ENCODE measurements at regions of chr1 and their contacts with region 1.

Region 1: DNA sequence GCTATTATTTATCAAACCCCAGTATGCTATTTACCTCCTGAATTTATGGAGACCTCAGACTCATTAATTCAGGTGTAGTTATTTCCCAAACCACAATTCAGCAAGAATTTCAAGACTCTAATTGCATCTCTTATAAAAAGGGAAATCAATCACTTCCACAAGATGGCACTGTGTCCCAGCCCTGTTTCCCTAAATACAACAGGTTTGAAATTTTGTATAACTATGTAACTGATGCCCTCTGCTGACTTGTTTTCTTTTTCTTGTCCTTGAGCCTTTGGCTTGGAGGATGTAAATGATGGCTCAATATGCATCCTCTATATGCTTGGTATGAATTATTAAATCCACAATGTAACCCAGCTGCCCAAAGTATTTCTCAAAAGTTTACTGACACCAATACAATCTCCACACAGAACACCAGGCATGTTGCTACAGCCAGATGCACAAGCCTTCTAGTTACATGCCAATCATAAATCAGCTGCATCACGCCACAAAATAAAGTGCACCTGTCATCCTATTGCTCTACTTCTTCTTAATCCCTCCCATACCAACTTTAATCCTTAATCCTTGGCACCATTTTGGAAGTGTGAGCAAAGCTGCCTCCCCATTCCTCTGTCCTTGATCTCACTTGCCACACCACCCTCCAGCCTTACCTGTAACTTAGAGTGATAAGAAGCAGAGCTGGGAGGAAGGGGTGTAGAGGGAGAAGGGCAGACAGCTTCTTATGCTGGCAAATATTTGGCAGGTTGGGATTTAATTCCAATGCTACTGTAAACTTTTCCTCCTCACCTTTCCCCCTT is 9.0 kb downstream of the C1orf105 start:
- DNase-seq: peak; percentile 55
- H3K4me3 ChIP-seq: no peak overlapping the region
- H3K27ac ChIP-seq: no peak overlapping the region
- H3K4me1 ChIP-seq: no peaks in the 10 kb centered on the region
- H3K27me3 ChIP-seq: no peaks in the 10 kb centered on the region
- CTCF ChIP-seq: peak; percentile 29 to 85 (median 82)
- POLR2A ChIP-seq: no peak

Region 2: DNA sequence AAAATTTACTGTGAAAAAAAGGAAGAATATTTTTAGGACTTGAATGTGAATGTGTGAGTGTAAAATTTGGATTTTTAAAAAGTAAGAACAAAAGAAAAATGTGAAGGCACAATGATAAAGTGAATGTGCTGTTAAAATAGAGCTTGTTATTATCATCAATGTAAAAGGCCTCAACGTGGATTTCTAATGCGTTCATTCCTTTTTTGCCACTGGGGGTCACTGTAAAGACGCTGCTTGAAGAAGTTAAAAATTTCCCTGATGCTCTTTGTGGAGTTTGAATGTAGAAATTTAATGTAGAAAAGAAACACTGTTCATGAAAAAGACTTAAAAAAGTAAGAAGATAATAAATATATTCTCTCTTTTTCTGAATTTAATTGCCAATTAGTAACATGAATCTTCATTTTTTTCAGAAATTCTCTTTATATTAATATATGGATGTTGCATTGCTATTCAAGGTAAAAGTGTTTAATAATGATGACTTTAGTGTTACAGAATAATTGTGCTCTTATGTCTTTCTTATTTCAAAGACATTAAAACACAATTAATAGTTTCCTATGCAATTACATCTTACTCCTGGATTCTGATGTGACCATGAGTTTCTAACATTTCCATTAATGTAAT is 426.7 kb before region 1 on chr1:
- intact Hi-C with region 1: loop called (anchors 10 kb)
- DNase-seq: no peak
- H3K4me3 ChIP-seq: no peak overlapping the region
- H3K27ac ChIP-seq: no peak overlapping the region
- H3K4me1 ChIP-seq: peaks cover 6% of the 10 kb centered on the region
- H3K27me3 ChIP-seq: no peaks in the 10 kb centered on the region
- CTCF ChIP-seq: peak in 3 of 4 experiments; percentile 33 to 59 (median 54)
- POLR2A ChIP-seq: no peak

Region 3: GRCh38 chr1:172154551-172154950 is 275.0 kb before region 1 on chr1:
- intact Hi-C with region 1: no loop called
- DNase-seq: no peak
- H3K4me3 ChIP-seq: no peak overlapping the region
- H3K27ac ChIP-seq: no peak overlapping the region
- H3K4me1 ChIP-seq: no peaks in the 10 kb centered on the region
- H3K27me3 ChIP-seq: no peaks in the 10 kb centered on the region
- CTCF ChIP-seq: no peak
- POLR2A ChIP-seq: no peak

Measured in prostate gland (tissue), 2 donors.